OCI-LY7 (cell line): ENCODE measurements at regions of chrX and their contacts with region 1.

Region 1: DNA sequence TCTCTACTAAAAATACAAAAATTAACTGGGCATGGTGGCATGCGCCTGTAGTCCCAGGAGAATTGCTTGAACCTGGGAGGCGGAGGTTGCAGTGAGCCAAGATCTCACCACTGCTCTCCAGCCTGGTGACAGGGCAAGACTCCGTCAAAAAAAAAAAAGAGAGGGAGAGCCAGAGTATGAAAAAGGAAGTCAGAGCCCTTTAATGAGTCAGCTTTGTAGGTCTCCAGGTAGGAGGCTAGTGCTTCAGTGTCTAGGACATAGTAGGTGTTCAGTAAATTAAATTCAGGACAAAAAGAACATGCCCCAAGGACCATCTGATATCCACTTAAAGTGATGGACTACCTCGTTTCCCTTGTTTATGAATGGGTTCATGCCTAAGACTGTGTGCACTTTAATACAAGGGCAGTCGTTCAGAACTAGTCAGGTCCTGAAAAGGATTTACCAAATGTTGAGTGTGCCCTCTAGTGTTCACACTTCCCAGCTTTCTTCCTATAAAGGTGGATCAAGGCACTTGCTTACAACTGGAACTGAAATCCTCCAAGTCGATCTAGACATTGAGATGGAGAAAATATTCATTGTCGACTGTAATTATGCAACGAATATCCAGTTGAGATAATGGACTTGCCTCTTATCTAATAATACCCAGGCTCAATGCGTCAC is 29.0 kb downstream of the F9 start:
- DNase-seq: peak; percentile 76
- H3K4me3 ChIP-seq: no peak overlapping the region
- H3K27ac ChIP-seq: no peak overlapping the region
- H3K4me1 ChIP-seq: peaks cover 20% of the 10 kb centered on the region
- CTCF ChIP-seq: peak; percentile 77

Region 2: DNA sequence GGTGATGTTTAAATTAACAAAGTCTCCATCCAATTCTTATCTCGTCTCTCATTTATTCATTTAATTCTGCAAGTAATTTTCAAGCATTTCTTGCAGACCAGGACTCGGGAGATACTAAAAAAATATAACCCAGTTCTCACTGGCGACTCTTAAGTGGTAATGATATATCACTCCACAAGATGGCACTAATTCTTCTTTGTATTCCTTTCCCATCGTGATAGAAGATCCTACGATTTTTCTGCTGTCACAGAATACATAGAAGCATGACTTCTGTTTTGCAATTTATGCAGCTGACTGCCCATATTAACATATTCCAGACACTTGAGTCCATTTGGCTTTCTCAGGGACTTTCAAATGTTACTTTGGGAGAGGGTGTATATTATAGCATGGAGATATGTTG is 784.0 kb before region 1 on chrX:
- CTCF ChIA-PET with region 1: no interaction called
- POLR2A ChIA-PET with region 1: no interaction called
- intact Hi-C with region 1: loop called (anchors 10 kb)
- DNase-seq: peak; percentile 7
- H3K4me3 ChIP-seq: no peak overlapping the region
- H3K27ac ChIP-seq: no peak overlapping the region
- H3K4me1 ChIP-seq: no peaks in the 10 kb centered on the region
- CTCF ChIP-seq: peak; percentile 67

Region 3: GRCh38 chrX:139126493-139126892 is 433.0 kb before region 1 on chrX:
- CTCF ChIA-PET with region 1: no interaction called
- POLR2A ChIA-PET with region 1: no interaction called
- intact Hi-C with region 1: loop called (anchors 1 kb)
- DNase-seq: peak; percentile 46
- H3K4me3 ChIP-seq: no peak overlapping the region
- H3K27ac ChIP-seq: no peak overlapping the region
- H3K4me1 ChIP-seq: no peaks in the 10 kb centered on the region
- CTCF ChIP-seq: peak; percentile 72

Region 4: GRCh38 chrX:139392507-139392906 is 167.0 kb before region 1 on chrX:
- CTCF ChIA-PET with region 1: no interaction called
- POLR2A ChIA-PET with region 1: no interaction called
- intact Hi-C with region 1: loop called (anchors 5 kb)
- DNase-seq: no peak
- H3K4me3 ChIP-seq: no peak overlapping the region
- H3K27ac ChIP-seq: no peak overlapping the region
- H3K4me1 ChIP-seq: no peaks in the 10 kb centered on the region
- CTCF ChIP-seq: 0 out of 2 replicates have a peak, but pooled peaks have one; percentile 16

Region 5: GRCh38 chrX:139680378-139680777 is 120.9 kb after region 1 on chrX:
- CTCF ChIA-PET with region 1: no interaction called
- POLR2A ChIA-PET with region 1: no interaction called
- intact Hi-C with region 1: no loop called
- DNase-seq: no peak
- H3K4me3 ChIP-seq: no peak overlapping the region
- H3K27ac ChIP-seq: no peak overlapping the region
- H3K4me1 ChIP-seq: no peaks in the 10 kb centered on the region
- CTCF ChIP-seq: no peak